ENCODE measurements at regions of chr19 and their contacts with region 1.

Region 1: GRCh38 chr19:54115109-54116063 is at the starts of genes PRPF31 and TFPT:
- DNase-seq: peak; percentile 96 to 98 (median 98)
- ATAC-seq: peak; percentile 93 to 96 (median 94)
- H3K4me3 ChIP-seq: peak within 1 kb of the TSS; percentile 57 to 99 (median 80)
- H3K27ac ChIP-seq: peak within 1 kb of the TSS; percentile 78 to 95 (median 92)
- H3K4me1 ChIP-seq: peaks cover 4 to 26% (median 22%) of the 10 kb centered on the region in 12 donors
- H3K27me3 ChIP-seq: no peaks in the 10 kb centered on the region
- CTCF ChIP-seq: no peak
- POLR2A ChIP-seq: peak in 1 of 2 donors; percentile 47
- total RNA-seq, gene PRPF31: 30.0 to 58.4 (median 37.8) TPM
- total RNA-seq, gene TFPT: 9.6 to 23.1 (median 12.5) TPM

Region 2: DNA sequence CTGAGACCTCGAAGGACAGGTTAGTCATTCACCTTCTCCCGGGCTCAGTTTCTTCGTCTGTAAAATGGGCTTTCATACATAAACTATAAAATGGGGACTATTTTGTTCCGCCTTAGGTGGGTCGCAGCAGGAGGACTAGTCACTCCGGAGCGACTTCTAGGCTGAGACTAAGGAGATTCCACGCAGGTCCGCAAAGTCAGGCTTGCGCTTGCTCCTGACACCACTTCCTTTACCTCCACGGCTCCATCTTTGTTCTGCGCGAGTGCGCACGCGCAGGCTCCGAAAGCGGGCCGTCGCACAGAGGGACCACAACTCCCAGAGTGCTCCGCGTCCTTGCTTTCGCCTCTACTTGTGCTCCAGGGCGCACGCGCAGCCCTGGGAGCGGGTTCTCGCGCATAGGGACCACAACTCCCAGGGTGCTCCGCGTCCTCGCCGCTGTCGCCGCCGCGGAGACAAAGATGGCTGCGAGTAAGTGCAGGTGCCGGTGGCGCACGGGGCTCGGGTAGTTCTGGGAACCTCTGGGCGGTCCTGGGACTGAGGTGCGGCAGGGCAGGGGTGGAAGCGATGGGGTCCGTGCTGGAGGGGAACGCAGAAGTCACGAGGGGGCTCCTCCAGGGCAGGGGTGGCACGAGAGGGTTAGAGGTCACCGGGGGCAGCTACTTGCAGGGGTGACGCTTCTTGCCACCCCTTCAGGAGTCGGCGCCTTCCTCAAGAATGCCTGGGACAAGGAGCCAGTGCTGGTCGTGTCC is 12.8 kb before region 1 on chr19 and contains the start of gene NDUFA3:
- intact Hi-C with region 1: loop called in 3 of 10 experiments (anchors 1 kb)
- DNase-seq: peak; percentile 98 to 99 (median 99)
- ATAC-seq: peak; percentile 99 to 100 (median 99)
- H3K4me3 ChIP-seq: peak within 1 kb of the TSS; percentile 60 to 98 (median 88)
- H3K27ac ChIP-seq: peak within 1 kb of the TSS; percentile 25 to 91 (median 82)
- H3K4me1 ChIP-seq: peaks cover 3 to 18% (median 11%) of the 10 kb centered on the region in 12 donors
- H3K27me3 ChIP-seq: peaks cover 0 to 9% (median 0%) of the 10 kb centered on the region in 9 donors
- CTCF ChIP-seq: no peak
- POLR2A ChIP-seq: peak; percentile 36 to 87
- total RNA-seq, gene NDUFA3: 32.2 to 501 (median 299) TPM

Measured in heart left ventricle (tissue), 16 donors.